Aorta (tissue), 5 donors: ENCODE measurements at regions of chr10 and their contacts with region 1.

Region 1: DNA sequence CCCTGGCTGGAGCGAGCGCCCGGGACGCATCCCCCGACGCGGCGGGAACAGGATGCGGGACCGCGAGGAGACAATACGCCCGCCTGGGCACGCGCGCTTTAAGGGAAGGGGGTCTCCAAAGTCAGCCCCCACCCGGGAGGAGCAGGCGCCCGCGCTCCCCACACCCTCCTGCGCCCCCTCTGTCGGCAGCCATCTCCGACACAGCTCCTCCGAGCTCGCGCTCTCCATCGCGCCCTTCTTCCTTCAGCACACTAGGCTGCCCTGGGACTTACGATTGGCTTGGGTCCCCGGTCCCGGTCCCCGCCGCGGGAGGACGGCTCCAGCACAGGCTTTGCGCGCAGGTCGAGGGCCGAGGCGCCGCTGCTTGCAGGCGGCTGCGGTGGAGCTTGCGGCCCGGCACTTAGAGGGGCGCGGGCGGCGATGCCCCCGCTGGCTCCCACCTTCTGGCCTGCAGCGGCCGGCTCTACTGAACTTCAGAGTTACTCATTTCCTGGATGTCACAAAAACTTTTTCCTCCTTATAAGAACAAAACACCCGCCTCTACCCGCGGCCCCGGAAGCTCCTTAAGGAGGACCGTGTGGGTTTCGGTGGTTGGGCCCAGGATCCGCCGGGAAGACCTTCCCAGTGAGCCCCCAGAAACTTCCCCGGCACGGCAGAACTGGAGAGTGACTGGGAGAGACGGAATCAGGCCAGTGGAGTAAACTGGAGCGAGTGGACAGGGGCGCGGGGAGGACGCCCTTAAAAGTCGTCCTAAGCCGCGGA is at the start of gene ITPRIP:
- DNase-seq: peak; percentile 91
- ATAC-seq: peak; percentile 92
- H3K4me3 ChIP-seq: peak within 1 kb of the TSS; percentile 62 to 77
- H3K27ac ChIP-seq: peak within 1 kb of the TSS; percentile 92 to 98
- H3K4me1 ChIP-seq: peaks cover 0 to 2% of the 10 kb centered on the region in 2 donors
- H3K27me3 ChIP-seq: no peaks in the 10 kb centered on the region
- total RNA-seq, gene ITPRIP: 22.3 to 51.4 TPM

Region 2: GRCh38 chr10:103918053-103918846 is 419.9 kb before region 1 on chr10 and contains the start of gene STN1:
- intact Hi-C with region 1: loop called in 1 of 2 experiments (anchors 5 kb)
- DNase-seq: peak; percentile 98 to 99
- ATAC-seq: peak; percentile 98
- H3K4me3 ChIP-seq: peak within 1 kb of the TSS; percentile 70 to 86
- H3K27ac ChIP-seq: peak within 1 kb of the TSS; percentile 86 to 97
- H3K4me1 ChIP-seq: peaks cover 0 to 2% of the 10 kb centered on the region in 2 donors
- H3K27me3 ChIP-seq: no peaks in the 10 kb centered on the region
- total RNA-seq, gene STN1: 20.3 to 24.2 TPM

Region 3: DNA sequence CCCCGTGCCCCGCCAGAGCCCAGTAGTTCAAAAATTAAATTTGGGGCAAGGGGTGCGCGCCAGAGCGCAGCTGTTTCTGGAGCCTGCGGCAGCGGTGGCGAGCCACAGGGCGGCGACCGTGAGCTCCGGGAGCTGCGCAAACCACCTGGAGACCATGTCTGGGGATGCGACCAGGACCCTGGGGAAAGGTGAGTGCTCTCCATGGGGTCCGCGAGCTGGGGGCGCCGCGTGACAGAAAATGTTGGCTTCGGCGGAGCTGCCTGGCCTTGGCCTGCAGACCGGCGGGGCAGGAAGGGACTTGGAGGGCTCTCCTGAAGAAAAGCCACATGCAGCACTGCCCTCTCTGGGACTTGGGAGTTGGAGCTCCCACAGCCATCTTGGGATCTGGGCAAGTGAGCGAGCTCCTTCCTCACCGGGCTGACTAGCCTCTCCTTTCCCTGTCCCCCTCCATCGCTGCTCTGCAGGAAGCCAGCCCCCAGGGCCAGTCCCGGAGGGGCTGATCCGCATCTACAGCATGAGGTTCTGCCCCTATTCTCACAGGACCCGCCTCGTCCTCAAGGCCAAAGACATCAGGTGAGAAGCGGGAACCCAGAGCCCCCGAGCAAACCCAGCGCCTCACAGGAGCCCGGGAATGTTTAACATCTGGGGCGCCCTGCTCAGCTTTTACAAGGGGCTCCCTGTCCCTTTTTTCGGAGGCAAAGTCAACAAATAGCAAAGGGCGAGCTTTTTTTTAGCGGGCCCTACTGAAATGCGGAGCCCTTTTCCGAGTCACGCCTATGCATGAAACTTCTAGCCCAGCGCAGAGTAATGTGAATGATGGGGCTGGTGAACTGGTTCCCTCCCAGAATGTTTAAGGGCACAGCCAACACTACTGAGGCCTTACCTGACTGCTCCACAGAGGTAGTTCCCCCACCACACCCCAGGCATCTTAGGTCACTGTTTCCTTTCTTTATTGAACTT is 63.1 kb before region 1 on chr10:
- intact Hi-C with region 1: no loop called
- DNase-seq: peak; percentile 57 to 78
- ATAC-seq: peak; percentile 83
- H3K4me3 ChIP-seq: peak overlapping the region in 1 of 2 donors; percentile 22
- H3K27ac ChIP-seq: no peak overlapping the region
- H3K4me1 ChIP-seq: no peaks in the 10 kb centered on the region
- H3K27me3 ChIP-seq: no peaks in the 10 kb centered on the region

Region 4: DNA sequence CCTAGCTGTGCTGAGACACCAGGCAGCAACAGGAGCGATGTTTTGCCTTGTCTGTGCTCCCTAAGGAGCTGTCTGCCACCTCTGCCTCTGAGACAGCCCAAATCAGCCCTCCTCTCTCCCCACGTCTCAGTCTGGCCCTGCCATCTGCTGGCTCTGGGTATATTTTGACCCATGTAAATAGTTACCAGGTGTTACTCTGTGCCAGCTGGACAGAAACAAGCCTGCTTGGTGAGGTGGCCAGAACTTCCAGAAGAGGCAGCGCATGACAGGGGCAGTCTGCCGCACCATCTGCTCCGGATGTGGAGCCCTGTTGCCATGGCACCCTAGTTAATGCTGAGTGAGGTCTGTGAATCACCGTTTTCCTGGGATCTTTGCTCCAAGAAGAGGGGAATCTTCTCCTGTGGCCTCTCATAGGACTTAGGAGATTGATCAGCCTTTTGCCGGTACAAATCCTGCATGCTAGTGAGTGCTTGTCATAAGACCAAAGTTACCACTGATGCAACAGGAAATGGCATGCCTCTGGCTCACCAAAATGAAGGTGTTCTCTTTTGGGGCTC is 37.3 kb before region 1 on chr10:
- intact Hi-C with region 1: loop called in 1 of 2 experiments (anchors 2 kb)
- DNase-seq: peak; percentile 87 to 91
- ATAC-seq: peak; percentile 83
- H3K4me3 ChIP-seq: no peak overlapping the region
- H3K27ac ChIP-seq: peak overlapping the region; percentile 87 to 97
- H3K4me1 ChIP-seq: peaks cover 0 to 4% of the 10 kb centered on the region in 2 donors
- H3K27me3 ChIP-seq: no peaks in the 10 kb centered on the region

Region 5: DNA sequence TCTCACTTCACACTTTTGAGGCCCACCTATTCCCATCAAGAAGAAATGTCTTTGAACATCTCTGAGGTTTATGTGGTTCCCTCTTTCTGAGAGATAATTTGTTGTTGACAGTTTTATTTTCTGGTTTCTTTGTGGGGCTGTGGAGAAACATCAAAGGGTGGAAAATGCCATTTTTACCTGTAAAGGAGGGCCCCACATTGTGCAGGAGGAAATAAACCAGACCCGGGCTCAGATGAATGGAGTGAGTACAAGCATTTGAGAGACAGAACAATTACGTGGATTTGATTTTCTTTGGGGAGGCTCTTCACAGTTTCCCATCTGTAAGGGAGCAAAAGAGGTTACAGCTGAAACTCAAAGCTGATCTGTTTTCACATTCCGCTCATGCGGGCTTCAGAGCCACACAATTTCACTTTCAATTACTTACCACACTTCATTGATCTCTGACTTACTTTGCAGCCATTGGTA is 29.7 kb before region 1 on chr10:
- intact Hi-C with region 1: loop called in 1 of 2 experiments (anchors 2 kb)
- DNase-seq: no peak
- ATAC-seq: no peak
- H3K4me3 ChIP-seq: no peak overlapping the region
- H3K27ac ChIP-seq: no peak overlapping the region
- H3K4me1 ChIP-seq: peaks cover 0 to 2% of the 10 kb centered on the region in 2 donors
- H3K27me3 ChIP-seq: no peaks in the 10 kb centered on the region

Region 6: DNA sequence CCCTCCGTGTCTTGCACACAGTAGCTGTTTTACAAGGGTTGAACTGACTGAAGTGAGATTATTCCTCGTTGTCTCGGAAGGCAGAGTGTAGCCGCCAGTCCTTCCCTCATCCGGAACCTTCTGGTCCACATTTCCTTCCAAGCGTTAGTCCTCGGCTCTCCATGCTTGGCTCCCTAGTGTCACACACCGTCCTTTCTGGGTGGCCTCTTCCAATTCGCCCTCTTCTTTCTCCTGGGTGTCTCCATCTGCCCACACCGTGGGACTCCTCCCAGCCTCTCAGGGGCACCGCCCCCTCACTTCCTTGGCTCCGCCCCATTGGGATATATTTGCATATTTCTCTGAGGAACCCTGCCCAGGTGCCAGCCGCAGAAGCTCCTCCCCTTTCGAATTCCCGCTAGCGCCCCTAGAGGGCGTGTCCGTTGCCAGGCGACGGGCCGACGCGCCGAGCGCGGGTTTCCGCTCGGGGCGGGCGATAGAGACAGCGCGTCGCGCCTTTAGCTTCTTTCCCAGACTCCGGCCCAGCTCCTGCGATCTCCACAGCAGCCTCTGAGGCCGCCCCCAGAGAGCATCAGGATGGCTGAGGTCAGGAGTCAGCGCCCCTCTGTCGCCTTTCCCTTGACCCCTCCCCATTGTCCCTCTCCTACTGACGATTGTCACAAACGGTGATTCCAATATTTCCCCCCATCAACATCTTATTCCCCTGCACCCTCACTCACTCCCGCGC is 15.3 kb after region 1 on chr10 and contains the start of gene CFAP58:
- intact Hi-C with region 1: no loop called
- DNase-seq: peak; percentile 96 to 97
- ATAC-seq: peak; percentile 93
- H3K4me3 ChIP-seq: peak within 1 kb of the TSS in 1 of 2 donors; percentile 44
- H3K27ac ChIP-seq: no peak within 1 kb of the TSS
- H3K4me1 ChIP-seq: no peaks in the 10 kb centered on the region
- H3K27me3 ChIP-seq: no peaks in the 10 kb centered on the region
- total RNA-seq, gene CFAP58: 1.1 to 1.3 TPM